MCF 10A (cell line): ENCODE measurements at regions of chr2 and their contacts with region 1.

Region 1: DNA sequence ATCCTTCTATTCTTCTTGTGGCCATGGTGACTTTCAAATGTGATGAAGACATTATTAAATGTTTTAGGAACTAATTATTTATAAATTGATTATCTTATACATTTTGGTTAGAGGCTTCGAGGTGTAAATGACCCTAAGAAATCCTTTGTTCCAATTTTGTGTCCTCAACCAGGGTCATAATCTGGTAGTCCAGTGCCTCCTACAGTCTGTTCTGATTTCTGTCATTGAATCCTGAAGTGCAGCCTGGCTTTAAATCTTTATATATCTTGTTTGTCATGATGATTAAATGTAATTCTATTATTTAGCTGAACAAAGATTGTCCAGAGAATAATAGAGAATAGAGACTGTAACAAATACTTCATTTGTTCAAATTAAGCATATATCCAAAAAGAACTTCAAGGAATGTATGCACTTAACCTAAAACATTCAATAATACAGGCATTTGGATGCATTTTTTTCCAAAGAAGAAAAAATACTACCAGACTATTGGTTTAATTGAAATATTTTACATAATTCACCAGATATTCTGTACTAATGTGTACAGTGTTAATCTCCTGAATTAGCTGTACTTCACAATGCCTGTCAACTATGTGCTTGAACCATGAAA is 89.8 kb downstream of the PRPF40A start:
- DNase-seq: peak; percentile 39
- H3K4me3 Mint-ChIP-seq: no peak overlapping the region
- H3K27ac Mint-ChIP-seq: no peak overlapping the region
- H3K4me1 Mint-ChIP-seq: no peaks in the 10 kb centered on the region
- H3K27me3 Mint-ChIP-seq: no peaks in the 10 kb centered on the region
- CTCF ChIP-seq: peak; percentile 52

Region 2: DNA sequence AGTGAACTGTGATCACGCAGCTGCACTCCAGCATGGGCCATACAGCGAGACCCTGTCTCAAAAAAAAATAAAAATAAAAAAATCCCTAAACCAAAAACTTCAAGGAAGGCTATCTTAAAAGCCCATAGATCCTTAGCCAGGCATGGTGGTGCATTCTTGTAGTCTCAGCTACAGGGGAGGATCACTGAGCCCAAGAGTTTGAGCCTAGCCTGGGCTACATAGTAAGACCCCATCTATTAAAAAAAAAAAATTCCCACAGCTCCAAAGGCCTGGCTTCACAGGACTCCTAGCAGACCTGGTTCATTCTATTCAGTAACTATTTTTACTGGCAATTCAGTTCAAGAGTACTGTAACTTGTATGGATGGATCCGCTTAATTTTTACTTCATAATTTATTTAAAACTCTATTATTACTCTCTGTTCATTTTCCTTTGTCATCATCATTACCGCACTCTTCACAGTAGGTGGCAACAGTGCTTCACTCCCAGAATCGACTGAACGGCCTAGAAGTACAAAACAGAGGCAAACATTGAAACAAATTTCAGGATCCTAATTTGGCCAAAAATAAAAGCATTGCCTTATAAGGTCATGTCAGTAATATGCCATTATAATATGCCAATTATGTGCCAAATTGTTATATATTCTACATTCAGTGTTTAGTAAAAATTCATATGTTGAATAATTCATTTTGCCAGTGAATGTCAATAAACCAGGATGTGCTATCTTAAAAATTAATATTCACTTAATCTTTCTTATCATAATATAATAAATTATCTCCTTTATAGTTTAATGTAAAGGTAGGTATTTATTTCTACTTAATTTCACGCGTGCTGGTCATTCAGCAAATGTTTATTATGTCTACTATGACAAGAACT is 437.6 kb before region 1 on chr2:
- CTCF ChIA-PET with region 1: interaction called, 17 read pairs
- POLR2A ChIA-PET with region 1: interaction called, 6 read pairs
- intact Hi-C with region 1: loop called (anchors 1 kb)
- DNase-seq: peak; percentile 85
- H3K4me3 Mint-ChIP-seq: no peak overlapping the region
- H3K27ac Mint-ChIP-seq: no peak overlapping the region
- H3K4me1 Mint-ChIP-seq: no peaks in the 10 kb centered on the region
- H3K27me3 Mint-ChIP-seq: no peaks in the 10 kb centered on the region
- CTCF ChIP-seq: peak; percentile 84

Region 3: DNA sequence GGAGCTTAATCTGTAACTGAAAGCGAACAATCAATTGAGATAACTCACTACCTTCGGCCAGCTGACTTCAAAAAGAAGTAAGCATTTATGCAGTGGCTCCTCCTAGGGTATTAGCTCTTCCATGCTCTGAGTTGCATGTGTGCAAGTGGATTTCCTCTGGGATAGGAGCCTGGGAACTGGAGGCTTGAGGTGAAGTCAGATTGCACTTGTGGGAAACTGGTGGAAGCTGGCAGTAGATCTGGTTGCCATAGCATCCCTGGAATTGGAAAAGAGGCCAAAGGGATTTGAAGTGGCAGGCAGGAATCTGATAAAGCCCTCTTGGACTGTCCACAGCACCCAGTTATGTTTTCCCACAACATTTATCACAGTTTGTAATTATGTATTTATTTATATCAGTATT is 343.1 kb before region 1 on chr2:
- CTCF ChIA-PET with region 1: no interaction called
- POLR2A ChIA-PET with region 1: no interaction called
- intact Hi-C with region 1: no loop called
- DNase-seq: no peak
- H3K4me3 Mint-ChIP-seq: no peak overlapping the region
- H3K27ac Mint-ChIP-seq: no peak overlapping the region
- H3K4me1 Mint-ChIP-seq: no peaks in the 10 kb centered on the region
- H3K27me3 Mint-ChIP-seq: no peaks in the 10 kb centered on the region
- CTCF ChIP-seq: no peak

Region 4: GRCh38 chr2:152648336-152648735 is 20.9 kb after region 1 on chr2:
- CTCF ChIA-PET with region 1: no interaction called
- POLR2A ChIA-PET with region 1: no interaction called
- intact Hi-C with region 1: no loop called
- DNase-seq: no peak
- H3K4me3 Mint-ChIP-seq: no peak overlapping the region
- H3K27ac Mint-ChIP-seq: no peak overlapping the region
- H3K4me1 Mint-ChIP-seq: peaks cover 6% of the 10 kb centered on the region
- H3K27me3 Mint-ChIP-seq: no peaks in the 10 kb centered on the region
- CTCF ChIP-seq: peak; percentile 20